Esophagus squamous epithelium (tissue), 5 donors: ENCODE measurements at regions of chr15 and their contacts with region 1.

Region 1: GRCh38 chr15:62060113-62060895 is at the start of gene VPS13C:
- DNase-seq: peak; percentile 59
- H3K4me3 ChIP-seq: peak within 1 kb of the TSS; percentile 57 to 97 (median 80)
- H3K27ac ChIP-seq: peak within 1 kb of the TSS; percentile 81 to 96 (median 93)
- H3K4me1 ChIP-seq: peaks cover 12 to 56% (median 18%) of the 10 kb centered on the region in 3 donors
- H3K27me3 ChIP-seq: peaks cover 0 to 56% (median 2%) of the 10 kb centered on the region in 4 donors
- CTCF ChIP-seq: peak; percentile 61 to 91 (median 81)
- POLR2A ChIP-seq: peak in 2 of 4 donors; percentile 75 to 82
- total RNA-seq, gene VPS13C: 7.6 to 43.1 (median 18.0) TPM

Region 2: DNA sequence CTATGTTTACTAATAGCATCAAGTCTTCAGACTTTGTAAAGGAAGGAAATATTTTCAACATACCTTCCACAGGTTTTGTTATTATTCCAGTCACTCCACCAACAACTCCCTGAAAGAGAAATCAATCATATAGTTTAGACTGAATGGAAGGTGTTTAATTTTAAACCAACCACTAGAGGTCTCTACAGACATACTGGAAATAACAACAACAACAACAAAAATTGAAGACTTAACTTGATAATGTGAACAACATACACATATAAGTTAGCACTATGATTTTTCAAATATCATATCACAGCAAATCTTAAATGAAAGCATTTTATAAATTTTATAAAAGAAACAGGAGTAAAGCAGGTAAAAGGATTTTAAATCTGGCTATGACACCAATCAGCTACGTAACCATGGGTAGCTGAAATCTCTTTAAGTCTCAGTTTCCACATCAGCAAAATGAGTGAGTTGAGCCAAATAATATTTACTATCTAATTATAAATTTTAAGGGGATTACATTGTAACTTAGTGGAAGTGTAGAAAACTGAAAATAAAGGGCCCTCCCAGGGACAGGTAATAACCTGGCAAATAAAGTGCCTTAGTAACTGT is 188.3 kb before region 1 on chr15:
- intact Hi-C with region 1: loop called (anchors 10 kb)
- DNase-seq: no peak
- H3K4me3 ChIP-seq: no peak overlapping the region
- H3K27ac ChIP-seq: no peak overlapping the region
- H3K4me1 ChIP-seq: no peaks in the 10 kb centered on the region
- H3K27me3 ChIP-seq: no peaks in the 10 kb centered on the region
- CTCF ChIP-seq: peak; percentile 17 to 75 (median 46)
- POLR2A ChIP-seq: no peak

Region 3: DNA sequence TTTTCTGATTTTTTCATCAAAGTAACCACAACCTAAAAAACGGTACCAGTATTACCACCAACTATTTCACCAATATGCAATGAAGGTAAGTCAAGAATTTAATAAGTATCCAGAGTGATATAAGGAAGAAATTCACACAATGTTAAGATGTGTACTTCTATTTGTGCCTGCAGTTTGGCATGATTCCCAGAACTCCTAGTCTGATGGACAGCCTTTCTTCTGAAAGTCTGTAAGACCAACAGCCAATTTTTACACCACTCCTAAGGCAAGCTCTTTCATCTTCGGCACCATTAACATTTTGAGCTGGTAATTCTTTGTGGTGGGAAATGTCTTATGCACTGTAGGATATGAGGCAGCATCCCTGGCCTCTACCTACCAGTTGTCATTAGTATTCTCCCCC is 108.4 kb before region 1 on chr15:
- intact Hi-C with region 1: no loop called
- DNase-seq: no peak
- H3K4me3 ChIP-seq: no peak overlapping the region
- H3K27ac ChIP-seq: no peak overlapping the region
- H3K4me1 ChIP-seq: no peaks in the 10 kb centered on the region
- H3K27me3 ChIP-seq: no peaks in the 10 kb centered on the region
- CTCF ChIP-seq: no peak
- POLR2A ChIP-seq: no peak

Region 4: GRCh38 chr15:62119227-62119864 is 59.0 kb after region 1 on chr15:
- intact Hi-C with region 1: loop called (anchors 10 kb)
- DNase-seq: no peak
- H3K4me3 ChIP-seq: peak overlapping the region in 3 of 4 donors; percentile 14 to 55 (median 17)
- H3K27ac ChIP-seq: peak overlapping the region; percentile 70 to 91 (median 80)
- H3K4me1 ChIP-seq: peaks cover 0 to 34% (median 31%) of the 10 kb centered on the region in 3 donors
- H3K27me3 ChIP-seq: no peaks in the 10 kb centered on the region
- CTCF ChIP-seq: no peak
- POLR2A ChIP-seq: no peak

Region 5: GRCh38 chr15:62464705-62465104 is 404.4 kb after region 1 on chr15:
- intact Hi-C with region 1: no loop called
- DNase-seq: no peak
- H3K4me3 ChIP-seq: no peak overlapping the region
- H3K27ac ChIP-seq: no peak overlapping the region
- H3K4me1 ChIP-seq: peaks cover 0 to 11% (median 0%) of the 10 kb centered on the region in 3 donors
- H3K27me3 ChIP-seq: no peaks in the 10 kb centered on the region
- CTCF ChIP-seq: no peak
- POLR2A ChIP-seq: no peak